ENCODE measurements at regions of chr10 and their contacts with region 1.

Region 1: DNA sequence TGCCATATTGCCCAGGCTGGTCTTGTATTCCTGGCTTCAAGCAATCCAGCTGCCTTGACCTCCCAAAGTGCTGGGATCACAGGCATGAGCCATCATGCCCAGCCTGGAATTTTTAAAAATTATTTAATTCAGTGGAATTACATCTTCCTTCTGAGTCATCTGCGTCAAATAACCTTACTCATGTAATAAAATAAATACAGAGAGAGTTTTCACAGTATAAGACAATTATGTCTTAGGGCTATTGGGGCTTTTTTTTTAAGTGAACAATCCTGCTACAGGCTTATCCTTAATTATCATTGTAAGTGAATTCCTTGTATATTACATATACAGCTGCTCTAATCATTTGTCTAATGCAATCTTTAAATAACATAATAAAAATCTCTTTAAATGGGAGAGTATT is 108.3 kb downstream of the MAPK8 start:
- DNase-seq: no peak
- ATAC-seq: no peak
- H3K4me3 ChIP-seq: no peak overlapping the region
- H3K27ac ChIP-seq: peak overlapping the region in 1 of 12 donors; percentile 22
- H3K4me1 ChIP-seq: peaks cover 0 to 3% (median 0%) of the 10 kb centered on the region in 12 donors
- H3K27me3 ChIP-seq: no peaks in the 10 kb centered on the region
- CTCF ChIP-seq: no peak
- POLR2A ChIP-seq: no peak

Region 2: DNA sequence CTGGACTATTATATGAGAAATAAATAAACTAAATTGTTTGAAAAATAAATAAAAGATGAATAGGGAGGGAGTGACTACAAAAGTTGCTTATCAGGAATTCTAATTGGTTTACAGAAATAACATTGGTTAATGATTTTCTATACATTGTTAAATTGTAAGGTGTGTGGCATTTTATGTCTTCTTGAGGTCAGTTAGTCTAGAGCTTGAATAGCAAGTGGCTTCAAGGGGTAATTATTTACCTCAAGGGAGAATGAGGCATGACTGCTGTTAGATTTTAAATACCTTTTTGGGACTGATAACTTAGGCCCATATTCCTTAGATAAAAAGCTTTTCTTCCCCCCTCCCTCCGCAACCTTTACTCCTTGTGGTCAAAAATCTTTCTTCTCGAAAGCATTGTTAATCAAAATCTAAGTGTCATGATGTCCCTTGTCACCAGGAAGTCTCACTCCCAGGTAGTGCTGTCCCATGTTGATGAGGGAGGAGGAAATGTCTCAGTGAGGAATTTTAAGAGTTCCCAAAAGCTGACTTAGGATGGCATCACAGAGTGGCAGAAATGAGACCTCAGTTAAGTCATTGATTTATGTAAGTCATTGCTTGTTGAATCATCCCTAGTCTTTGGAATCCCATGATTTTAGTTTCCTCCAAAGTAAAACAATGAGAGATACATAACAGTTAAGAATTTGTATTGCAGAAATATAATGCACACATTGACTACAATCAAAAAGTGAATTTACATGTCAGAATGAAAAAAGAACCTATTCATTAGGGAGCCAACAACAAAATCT is 36.8 kb before region 1 on chr10:
- intact Hi-C with region 1: loop called in 1 of 10 experiments (anchors 2 kb)
- DNase-seq: no peak
- ATAC-seq: no peak
- H3K4me3 ChIP-seq: no peak overlapping the region
- H3K27ac ChIP-seq: no peak overlapping the region
- H3K4me1 ChIP-seq: peaks cover 0 to 8% (median 0%) of the 10 kb centered on the region in 12 donors
- H3K27me3 ChIP-seq: no peaks in the 10 kb centered on the region
- CTCF ChIP-seq: no peak
- POLR2A ChIP-seq: no peak

Region 3: GRCh38 chr10:48456361-48456804 is 41.6 kb after region 1 on chr10:
- intact Hi-C with region 1: no loop called
- DNase-seq: peak; percentile 60 to 81 (median 66)
- ATAC-seq: peak in 3 of 4 donors; percentile 47 to 69 (median 57)
- H3K4me3 ChIP-seq: no peak overlapping the region
- H3K27ac ChIP-seq: no peak overlapping the region
- H3K4me1 ChIP-seq: peaks cover 0 to 18% (median 3%) of the 10 kb centered on the region in 12 donors
- H3K27me3 ChIP-seq: no peaks in the 10 kb centered on the region
- CTCF ChIP-seq: no peak
- POLR2A ChIP-seq: no peak